Activated CD4-positive, alpha-beta T cell treated with anti-CD3 and anti-CD28 coated beads for 36 hours (primary cell): ENCODE measurements at regions of chr1 and their contacts with region 1.

Region 1: DNA sequence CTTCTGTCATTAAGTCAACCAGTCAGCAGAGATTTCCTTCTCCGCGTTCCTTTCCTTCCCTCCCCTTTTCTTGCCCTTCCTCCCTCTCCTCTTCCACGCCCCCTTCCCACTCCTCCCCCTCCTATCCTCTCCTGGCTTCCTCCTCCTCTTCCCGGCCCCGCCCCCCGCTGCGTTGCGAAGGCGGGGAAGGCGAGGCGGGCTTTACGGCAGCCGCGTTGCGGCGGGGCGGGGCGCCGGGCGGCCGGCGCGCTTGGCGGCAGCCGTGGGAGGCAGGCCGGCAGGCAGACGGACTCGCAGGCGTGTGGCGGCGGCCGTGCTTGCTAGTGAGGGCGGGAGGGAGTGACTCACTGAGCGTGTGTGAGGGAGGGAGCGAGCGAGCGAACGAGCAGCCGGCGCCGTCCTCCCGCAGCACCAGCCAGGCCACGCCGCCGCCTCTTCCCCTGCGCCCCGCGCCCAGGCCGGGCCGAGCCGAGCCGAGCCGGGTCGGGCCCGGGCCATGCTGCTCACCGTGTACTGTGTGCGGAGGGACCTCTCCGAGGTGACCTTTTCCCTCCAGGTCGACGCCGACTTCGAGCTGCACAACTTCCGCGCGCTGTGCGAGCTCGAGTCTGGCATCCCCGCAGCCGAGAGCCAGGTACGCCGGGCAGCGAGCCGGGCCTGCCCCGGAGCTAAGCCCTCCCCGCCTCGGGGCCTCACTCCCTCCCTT is at the start of gene DDI2:
- DNase-seq: peak; percentile 98
- ATAC-seq: peak; percentile 89
- H3K4me3 Mint-ChIP-seq: peak within 1 kb of the TSS; percentile 94
- H3K27ac Mint-ChIP-seq: peak within 1 kb of the TSS; percentile 95
- H3K4me1 Mint-ChIP-seq: peaks cover 45% of the 10 kb centered on the region
- H3K27me3 Mint-ChIP-seq: no peaks in the 10 kb centered on the region
- total RNA-seq, gene DDI2: 30.2 to 34.0 TPM

Region 2: GRCh38 chr1:15409388-15410222 is 207.7 kb before region 1 on chr1 and contains the start of gene EFHD2:
- CTCF ChIA-PET with region 1: no interaction called
- POLR2A ChIA-PET with region 1: no interaction called
- intact Hi-C with region 1: loop called in 1 of 2 experiments (anchors 1 kb)
- DNase-seq: peak; percentile 90
- ATAC-seq: peak; percentile 86
- H3K4me3 Mint-ChIP-seq: peak within 1 kb of the TSS; percentile 87
- H3K27ac Mint-ChIP-seq: peak within 1 kb of the TSS; percentile 81
- H3K4me1 Mint-ChIP-seq: peaks cover 28% of the 10 kb centered on the region
- H3K27me3 Mint-ChIP-seq: peaks cover 5% of the 10 kb centered on the region
- total RNA-seq, gene EFHD2: 43.1 to 48.6 TPM

Region 3: GRCh38 chr1:15603050-15603965 is 14.0 kb before region 1 on chr1:
- CTCF ChIA-PET with region 1: interaction called, 5 read pairs
- POLR2A ChIA-PET with region 1: interaction called, 3 read pairs
- intact Hi-C with region 1: loop called (anchors 1 kb)
- DNase-seq: peak; percentile 96
- ATAC-seq: peak; percentile 99
- H3K4me3 Mint-ChIP-seq: peak overlapping the region; percentile 55
- H3K27ac Mint-ChIP-seq: peak overlapping the region; percentile 45
- H3K4me1 Mint-ChIP-seq: peaks cover 11% of the 10 kb centered on the region
- H3K27me3 Mint-ChIP-seq: no peaks in the 10 kb centered on the region

Region 4: GRCh38 chr1:15835741-15836510 is 218.6 kb after region 1 on chr1:
- CTCF ChIA-PET with region 1: no interaction called
- POLR2A ChIA-PET with region 1: interaction called, 4 read pairs
- intact Hi-C with region 1: loop called (anchors 1 kb)
- DNase-seq: peak; percentile 100
- ATAC-seq: peak; percentile 59
- H3K4me3 Mint-ChIP-seq: peak overlapping the region; percentile 90
- H3K27ac Mint-ChIP-seq: peak overlapping the region; percentile 98
- H3K4me1 Mint-ChIP-seq: peaks cover 22% of the 10 kb centered on the region
- H3K27me3 Mint-ChIP-seq: no peaks in the 10 kb centered on the region

Region 5: DNA sequence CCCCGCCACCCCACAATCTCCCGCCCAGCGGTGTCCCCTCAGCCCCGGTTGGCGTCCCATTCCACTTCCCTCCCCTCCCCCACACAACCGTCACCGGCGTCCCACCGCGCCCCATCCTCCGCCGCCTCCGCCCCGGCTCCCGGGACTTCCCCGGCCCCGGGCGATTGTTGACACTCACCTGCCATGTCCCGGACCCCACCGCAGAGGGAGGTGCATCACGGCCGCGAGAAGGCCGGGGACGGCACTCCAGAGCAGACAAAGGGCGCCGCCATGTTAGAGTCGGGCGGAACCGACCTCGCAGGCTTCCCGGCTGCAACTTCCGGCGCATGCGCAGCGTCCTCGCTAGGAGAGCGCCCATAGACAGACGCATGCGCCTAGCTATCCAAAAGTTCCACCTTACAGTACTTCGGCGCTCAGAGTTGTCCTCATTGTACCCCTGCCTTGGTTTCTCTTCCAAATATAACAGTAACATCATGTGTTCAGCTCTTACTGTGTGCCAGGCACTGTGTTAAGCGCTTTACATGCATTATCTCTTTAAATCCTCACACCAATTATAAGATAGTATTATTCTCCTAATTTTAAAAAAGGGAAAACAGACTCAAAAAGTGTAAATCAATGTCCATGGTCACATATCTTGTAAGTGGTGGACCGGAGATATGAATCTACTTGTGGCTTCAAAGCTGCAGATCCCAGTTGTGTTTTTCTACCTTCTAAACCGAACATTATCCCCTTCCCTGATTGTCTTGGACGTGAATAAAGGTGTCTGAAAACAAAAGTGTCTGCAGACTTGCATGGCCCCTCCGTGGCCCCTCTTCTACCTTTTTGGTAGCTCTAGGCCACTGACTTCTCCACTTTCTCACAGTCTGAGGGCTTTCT is 358.7 kb after region 1 on chr1 and contains the start of gene ZBTB17:
- CTCF ChIA-PET with region 1: no interaction called
- POLR2A ChIA-PET with region 1: no interaction called
- intact Hi-C with region 1: loop called in 1 of 2 experiments (anchors 1 kb)
- DNase-seq: peak; percentile 98
- ATAC-seq: peak; percentile 89
- H3K4me3 Mint-ChIP-seq: peak within 1 kb of the TSS; percentile 85
- H3K27ac Mint-ChIP-seq: peak within 1 kb of the TSS; percentile 93
- H3K4me1 Mint-ChIP-seq: peaks cover 42% of the 10 kb centered on the region
- H3K27me3 Mint-ChIP-seq: no peaks in the 10 kb centered on the region
- total RNA-seq, gene ZBTB17: 47.7 to 48.3 TPM

Region 6: DNA sequence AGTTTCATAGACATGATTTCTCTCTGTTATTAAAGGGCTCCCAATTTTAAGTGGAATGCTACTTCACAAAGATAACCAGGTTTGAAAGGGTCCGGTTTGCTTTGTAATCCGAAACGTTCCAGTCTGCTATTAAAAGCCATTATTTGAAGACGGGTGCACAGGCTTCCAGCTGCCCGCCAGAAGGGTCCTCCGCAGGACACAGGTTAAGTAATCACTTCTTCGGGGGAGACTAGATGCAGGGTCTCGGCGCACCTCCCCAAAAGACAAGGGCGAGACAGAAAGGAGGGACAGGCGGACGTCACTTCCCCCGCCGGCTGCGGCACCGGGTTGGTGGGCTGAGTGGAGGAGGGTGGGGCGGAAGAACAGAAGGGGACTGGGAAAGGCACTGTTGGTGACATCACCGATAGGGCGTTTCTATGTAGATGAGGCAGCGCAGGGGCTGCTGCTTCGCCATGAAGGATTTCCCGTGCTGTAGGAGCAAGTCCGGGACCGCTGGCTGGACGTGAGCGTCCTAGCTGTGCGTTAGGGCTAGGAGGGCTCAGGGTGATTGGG is 1287.3 kb after region 1 on chr1:
- CTCF ChIA-PET with region 1: no interaction called
- POLR2A ChIA-PET with region 1: no interaction called
- intact Hi-C with region 1: loop called in 1 of 2 experiments (anchors 5 kb)
- DNase-seq: peak; percentile 100
- ATAC-seq: peak; percentile 90
- H3K4me3 Mint-ChIP-seq: no peak overlapping the region
- H3K27ac Mint-ChIP-seq: no peak overlapping the region
- H3K4me1 Mint-ChIP-seq: peaks cover 30% of the 10 kb centered on the region
- H3K27me3 Mint-ChIP-seq: no peaks in the 10 kb centered on the region